AG04449 (cell line): ENCODE measurements at regions of chr11 and their contacts with region 1.

Region 1: DNA sequence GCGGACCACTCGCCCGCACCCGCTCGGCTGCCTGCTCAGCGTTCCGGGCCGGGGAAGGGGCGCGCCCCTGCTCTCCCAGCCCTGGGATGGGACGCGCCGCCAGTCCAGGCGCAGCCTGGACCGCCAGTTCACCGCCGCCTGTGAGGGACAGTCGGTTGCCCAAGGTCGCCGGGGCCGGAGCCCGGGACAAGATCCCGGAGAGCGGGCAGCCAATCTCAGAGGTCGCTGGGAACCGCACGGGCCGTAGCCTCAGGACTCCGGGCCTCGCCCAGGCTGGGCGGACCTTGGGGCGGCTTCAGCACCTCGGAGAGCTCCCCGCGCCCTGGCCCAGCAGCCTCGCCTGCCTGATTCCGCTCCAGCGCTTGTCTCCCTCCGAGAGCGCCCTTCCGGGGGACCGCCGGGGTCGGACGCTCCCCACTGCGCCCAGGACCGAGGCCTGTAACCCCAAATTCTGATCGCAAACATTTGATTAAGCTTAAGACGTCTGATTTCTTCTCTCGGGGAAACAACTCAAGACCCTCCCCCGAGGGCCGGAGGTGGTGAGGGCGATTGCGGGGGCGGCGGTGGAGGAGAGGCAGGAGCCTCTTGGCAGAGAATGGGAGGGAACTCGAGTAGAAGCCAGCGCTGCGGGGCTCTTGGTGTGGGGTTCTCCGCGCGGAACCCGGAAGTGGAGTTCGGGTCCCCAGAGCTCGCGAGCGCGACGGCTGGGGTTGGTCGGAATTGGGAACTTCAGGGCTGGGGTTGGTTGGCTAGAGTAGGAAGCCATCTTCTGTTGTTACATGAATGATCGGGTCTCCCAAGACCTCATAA is 1.1 kb upstream of the CHRM4 start:
- DNase-seq: no peak
- H3K4me3 ChIP-seq: peak overlapping the region; percentile 48
- CTCF ChIP-seq: no peak

Region 2: GRCh38 chr11:46367244-46367915 is 25.2 kb before region 1 on chr11:
- CTCF ChIA-PET with region 1: interaction called, 39 read pairs
- POLR2A ChIA-PET with region 1: no interaction called
- DNase-seq: no peak
- H3K4me3 ChIP-seq: no peak overlapping the region
- CTCF ChIP-seq: peak; percentile 89

Region 3: DNA sequence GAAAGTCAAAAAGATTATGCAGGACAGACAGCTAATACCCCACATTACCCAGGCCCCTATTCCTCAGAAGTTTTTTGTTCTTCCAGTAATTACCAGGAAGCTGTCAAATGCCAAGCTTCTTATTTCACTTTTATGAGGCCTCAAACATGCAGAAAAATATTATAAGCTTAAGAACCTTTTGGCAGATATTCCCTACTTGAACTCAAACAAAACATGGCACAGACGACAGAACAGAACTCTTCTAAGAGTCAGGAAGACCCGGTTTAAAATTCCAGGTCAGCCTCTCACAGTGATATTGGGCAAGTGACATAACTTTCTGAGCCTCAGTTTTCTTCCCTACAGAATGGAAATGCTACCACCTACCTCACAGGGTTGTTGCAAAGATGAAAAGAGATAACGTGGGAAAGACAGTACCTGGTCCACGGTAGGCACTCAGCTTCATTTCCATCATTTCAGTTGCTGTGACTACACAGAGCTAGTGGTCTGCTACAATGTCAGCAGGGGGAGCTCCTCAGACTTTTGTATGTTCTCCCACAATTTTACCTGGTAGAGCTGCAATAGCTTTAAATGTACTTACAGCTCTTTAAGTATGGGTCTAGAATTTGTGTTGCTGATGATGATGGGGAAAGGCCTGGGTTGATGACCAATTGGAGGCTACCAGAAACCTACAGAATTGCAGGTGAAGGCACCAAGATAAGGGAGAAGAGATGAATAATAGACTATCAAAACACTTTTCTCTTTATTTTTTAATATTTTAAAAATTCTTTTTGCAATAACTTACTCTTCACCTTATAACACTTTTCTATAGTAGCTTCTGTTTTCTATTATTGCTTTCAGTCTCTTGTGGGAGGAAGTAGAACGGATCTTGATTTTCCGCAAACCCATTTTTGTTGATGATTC is 97.3 kb after region 1 on chr11:
- CTCF ChIA-PET with region 1: interaction called, 21 read pairs
- POLR2A ChIA-PET with region 1: no interaction called
- DNase-seq: no peak
- H3K4me3 ChIP-seq: no peak overlapping the region
- CTCF ChIP-seq: peak; percentile 58

Region 4: GRCh38 chr11:46529095-46529905 is 136.7 kb after region 1 on chr11:
- CTCF ChIA-PET with region 1: interaction called, 70 read pairs
- POLR2A ChIA-PET with region 1: no interaction called
- DNase-seq: no peak
- H3K4me3 ChIP-seq: no peak overlapping the region
- CTCF ChIP-seq: peak; percentile 84

Region 5: DNA sequence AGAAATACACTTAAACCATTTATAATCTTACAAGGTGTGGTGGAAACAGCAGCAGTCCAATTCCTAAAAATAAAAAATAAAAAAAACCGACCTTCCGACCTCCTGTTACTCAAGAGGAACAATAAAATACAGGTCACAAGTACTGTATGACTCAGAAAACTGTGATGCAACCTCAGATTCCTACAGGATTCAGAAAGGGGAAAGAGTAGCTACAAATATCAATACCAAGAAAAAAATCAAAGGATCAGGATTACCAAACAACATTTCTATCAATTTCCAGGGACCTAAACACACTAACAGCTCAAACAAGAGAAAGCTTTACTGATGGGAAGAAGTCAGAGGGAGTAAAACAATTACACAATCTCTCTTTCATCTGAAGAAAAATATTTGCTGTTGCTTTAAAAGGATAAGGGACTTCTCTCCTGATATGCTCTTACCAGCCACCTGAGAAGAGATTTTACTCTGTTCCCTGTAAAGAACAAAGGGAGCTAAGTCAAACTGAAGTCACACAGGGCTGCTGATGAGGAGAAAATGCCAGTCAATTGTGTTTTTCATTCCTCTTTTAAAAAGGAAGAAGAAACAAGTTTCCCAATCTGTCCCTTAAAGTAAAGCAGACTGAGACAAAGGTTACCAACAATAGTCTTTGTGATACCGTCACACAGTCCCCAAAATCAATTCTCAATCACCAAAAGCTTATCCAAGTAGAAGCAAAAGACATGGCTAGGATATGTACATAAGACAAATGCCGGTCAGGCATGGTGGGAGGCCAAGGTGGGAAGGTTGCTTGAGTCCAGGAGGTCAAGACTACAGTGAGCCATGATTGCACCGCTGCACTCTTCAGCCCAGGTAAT is 161.8 kb after region 1 on chr11:
- CTCF ChIA-PET with region 1: interaction called, 14 read pairs
- POLR2A ChIA-PET with region 1: no interaction called
- DNase-seq: no peak
- H3K4me3 ChIP-seq: no peak overlapping the region
- CTCF ChIP-seq: no peak

Region 6: DNA sequence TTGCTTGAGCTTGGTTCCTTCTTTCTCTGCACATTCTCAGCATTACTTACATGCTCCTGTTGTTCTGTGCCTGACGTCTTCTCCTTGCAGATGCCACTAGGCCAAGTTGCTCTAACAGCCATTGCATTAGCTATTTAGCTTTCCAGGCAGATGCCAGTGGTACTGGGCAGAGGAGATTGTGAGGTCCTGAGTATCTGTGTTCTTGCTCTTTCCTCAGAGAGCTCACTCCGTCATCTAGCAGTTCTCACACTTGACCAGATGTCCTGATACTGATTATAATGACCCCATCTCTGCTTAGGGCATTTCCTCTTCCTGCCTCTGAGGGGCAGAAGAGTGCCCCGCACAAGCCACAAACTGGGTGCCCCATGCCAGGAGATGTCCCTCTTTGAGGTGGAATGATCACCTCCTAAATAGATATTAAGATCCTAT is 277.1 kb after region 1 on chr11:
- CTCF ChIA-PET with region 1: interaction called, 12 read pairs
- POLR2A ChIA-PET with region 1: no interaction called
- DNase-seq: no peak
- H3K4me3 ChIP-seq: no peak overlapping the region
- CTCF ChIP-seq: no peak